Activated CD8-positive, alpha-beta memory T cell treated with anti-CD3 and anti-CD28 coated beads, Interleukin-2, amount 10 ng/mL, durations not matched to agents 7 days and 5 days (primary cell): ENCODE measurements at regions of chr2 and their contacts with region 1.

Region 1: GRCh38 chr2:113138428-113139322 is 11.3 kb downstream of the IL1RN start:
- DNase-seq: peak; percentile 67
- ATAC-seq: peak; percentile 81
- H3K4me3 Mint-ChIP-seq: peak overlapping the region; percentile 21
- H3K27ac Mint-ChIP-seq: peak overlapping the region; percentile 72
- H3K4me1 Mint-ChIP-seq: peaks cover 27% of the 10 kb centered on the region
- H3K27me3 Mint-ChIP-seq: no peaks in the 10 kb centered on the region

Region 2: GRCh38 chr2:113060396-113060795 is 78.3 kb before region 1 on chr2:
- CTCF ChIA-PET with region 1: no interaction called
- DNase-seq: no peak
- ATAC-seq: no peak
- H3K4me3 Mint-ChIP-seq: no peak overlapping the region
- H3K27ac Mint-ChIP-seq: no peak overlapping the region
- H3K4me1 Mint-ChIP-seq: no peaks in the 10 kb centered on the region
- H3K27me3 Mint-ChIP-seq: peaks cover 6% of the 10 kb centered on the region

Region 3: GRCh38 chr2:113105047-113105785 is 33.5 kb before region 1 on chr2:
- CTCF ChIA-PET with region 1: interaction called, 14 read pairs
- DNase-seq: peak; percentile 72
- ATAC-seq: peak; percentile 86
- H3K4me3 Mint-ChIP-seq: no peak overlapping the region
- H3K27ac Mint-ChIP-seq: peak overlapping the region; percentile 61
- H3K4me1 Mint-ChIP-seq: peaks cover 50% of the 10 kb centered on the region
- H3K27me3 Mint-ChIP-seq: no peaks in the 10 kb centered on the region

Region 4: DNA sequence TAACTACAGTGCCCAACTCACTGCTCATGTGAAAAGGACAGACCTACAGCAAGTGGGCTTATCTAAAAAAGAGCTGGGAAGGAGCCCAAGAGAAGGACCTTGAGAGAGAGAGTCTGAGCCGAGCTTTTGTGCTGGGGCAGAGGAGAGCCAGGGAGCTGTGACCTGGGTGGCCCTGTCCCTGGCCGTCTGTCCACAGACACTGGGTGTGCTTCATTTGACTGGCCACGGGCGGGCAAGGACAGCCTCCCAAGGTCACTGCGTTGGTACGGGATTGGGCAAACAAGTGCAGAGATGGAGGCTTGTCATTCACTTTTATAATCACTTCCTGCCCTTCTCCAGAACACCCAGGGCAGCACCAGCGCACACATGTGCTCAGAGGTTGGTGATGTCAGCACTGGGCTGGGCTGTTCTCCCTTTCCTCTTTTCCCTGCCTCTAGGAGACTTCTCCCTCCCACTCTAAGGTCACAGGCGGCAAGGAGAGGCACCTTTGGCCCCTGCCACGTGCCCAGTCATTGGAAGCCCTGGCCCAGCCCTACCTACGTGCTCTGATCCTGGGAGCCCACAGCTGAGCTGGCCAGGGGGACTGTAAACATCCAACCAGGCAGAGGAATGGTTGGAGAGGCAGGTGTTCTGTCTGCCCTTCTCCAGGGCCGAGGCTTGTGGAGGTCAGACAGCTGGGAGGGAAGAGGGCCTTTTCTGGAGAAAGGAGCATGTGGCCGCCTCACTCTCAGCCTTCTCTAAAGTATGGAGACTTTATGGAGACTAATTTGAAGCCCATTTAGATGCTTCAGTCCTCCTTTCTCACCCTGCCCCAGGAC is 28.6 kb after region 1 on chr2:
- CTCF ChIA-PET with region 1: interaction called, 39 read pairs
- DNase-seq: peak; percentile 69
- ATAC-seq: peak; percentile 78
- H3K4me3 Mint-ChIP-seq: peak overlapping the region; percentile 63
- H3K27ac Mint-ChIP-seq: peak overlapping the region; percentile 91
- H3K4me1 Mint-ChIP-seq: peaks cover 60% of the 10 kb centered on the region
- H3K27me3 Mint-ChIP-seq: no peaks in the 10 kb centered on the region

Region 5: DNA sequence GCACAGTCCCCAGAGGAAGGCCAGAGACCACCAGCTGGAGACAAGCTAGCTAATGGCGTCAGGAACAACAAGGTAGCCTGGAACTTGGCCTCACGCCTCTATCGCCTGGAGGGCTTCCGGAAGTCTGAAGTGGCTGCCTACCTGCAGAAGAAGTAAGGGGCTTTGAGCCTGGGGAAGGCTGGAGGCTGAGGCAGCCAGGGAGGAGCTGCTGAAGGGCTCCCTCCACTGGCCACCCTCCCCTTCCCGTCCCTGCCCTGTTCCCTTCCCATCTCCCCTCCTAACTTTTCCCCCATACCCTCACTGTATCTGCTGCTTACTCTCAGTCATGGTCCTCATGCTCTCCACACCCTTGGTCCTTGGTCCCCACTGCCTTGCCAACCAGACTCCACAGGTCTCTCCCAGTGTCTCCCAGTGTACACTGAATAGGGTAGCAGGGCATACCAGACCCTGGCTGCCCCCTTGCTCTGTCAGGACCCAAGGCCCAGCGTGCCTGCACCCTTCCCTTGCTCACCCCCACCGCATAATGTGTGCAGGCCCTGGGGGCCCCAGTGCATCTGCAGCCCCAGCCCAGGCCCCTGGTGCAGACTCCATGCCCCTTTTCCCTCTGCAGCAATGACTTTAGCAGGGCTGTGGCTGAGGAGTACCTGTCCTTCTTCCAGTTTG is 53.9 kb after region 1 on chr2:
- CTCF ChIA-PET with region 1: interaction called, 329 read pairs
- DNase-seq: no peak
- ATAC-seq: no peak
- H3K4me3 Mint-ChIP-seq: no peak overlapping the region
- H3K27ac Mint-ChIP-seq: peak overlapping the region; percentile 54
- H3K4me1 Mint-ChIP-seq: peaks cover 73% of the 10 kb centered on the region
- H3K27me3 Mint-ChIP-seq: no peaks in the 10 kb centered on the region

Region 6: DNA sequence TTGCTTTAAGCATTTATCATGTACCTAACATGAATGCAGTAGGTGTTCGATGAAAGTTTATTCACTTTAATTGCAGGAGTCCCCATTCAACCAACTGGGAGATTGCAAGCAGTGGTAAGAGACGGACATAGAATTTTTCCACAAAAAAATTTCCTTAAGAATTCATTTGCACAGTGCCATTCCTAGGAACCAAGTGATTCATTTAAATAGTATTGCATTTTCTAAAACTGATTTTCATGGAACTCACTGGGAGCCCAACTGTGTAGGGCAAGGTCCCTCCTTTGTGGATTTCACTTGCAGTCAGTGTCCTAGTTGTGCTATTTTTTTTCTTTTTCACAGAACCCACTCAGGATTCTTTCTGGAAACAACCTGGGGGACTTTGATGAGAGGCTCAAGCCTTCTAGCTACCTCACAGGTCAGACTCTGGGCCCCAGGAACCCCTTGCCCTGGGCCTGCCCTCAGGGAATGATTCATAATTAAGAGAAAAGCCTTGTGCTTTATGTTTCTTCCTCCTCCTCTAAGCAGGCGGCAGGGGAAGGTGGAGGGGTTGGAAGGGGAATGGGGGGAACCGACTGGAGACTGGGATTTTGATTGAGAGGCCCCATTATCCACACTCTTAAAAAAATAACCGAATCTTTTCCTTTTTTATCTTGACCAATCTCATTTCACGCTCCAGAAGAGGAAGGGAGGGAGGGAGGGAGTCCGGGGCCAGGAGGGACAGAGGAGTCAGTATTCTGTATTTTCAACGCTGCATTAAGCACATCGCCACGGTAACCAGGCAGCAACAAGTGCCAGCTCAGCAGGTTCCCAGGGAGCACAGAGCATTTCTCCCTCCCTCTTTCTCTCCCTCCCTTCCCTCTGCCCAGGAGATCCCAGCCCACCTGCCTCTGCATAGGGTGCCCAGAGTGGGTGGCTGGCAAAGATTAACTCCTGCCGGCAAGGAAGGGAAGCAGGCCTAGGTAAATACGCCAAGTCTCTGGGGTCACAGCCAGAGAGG is 86.9 kb after region 1 on chr2:
- CTCF ChIA-PET with region 1: interaction called, 20 read pairs
- DNase-seq: no peak
- ATAC-seq: no peak
- H3K4me3 Mint-ChIP-seq: no peak overlapping the region
- H3K27ac Mint-ChIP-seq: no peak overlapping the region
- H3K4me1 Mint-ChIP-seq: peaks cover 28% of the 10 kb centered on the region
- H3K27me3 Mint-ChIP-seq: peaks cover 2% of the 10 kb centered on the region

Region 7: GRCh38 chr2:113370478-113371091 is 231.9 kb after region 1 on chr2:
- CTCF ChIA-PET with region 1: interaction called, 12 read pairs
- DNase-seq: peak; percentile 86
- ATAC-seq: peak; percentile 99
- H3K4me3 Mint-ChIP-seq: no peak overlapping the region
- H3K27ac Mint-ChIP-seq: peak overlapping the region; percentile 66
- H3K4me1 Mint-ChIP-seq: peaks cover 21% of the 10 kb centered on the region
- H3K27me3 Mint-ChIP-seq: peaks cover 10% of the 10 kb centered on the region